ENCODE measurements at regions of chr4 and their contacts with region 1.

Region 1: GRCh38 chr4:78022517-78022916 is 34.6 kb upstream of the FRAS1 start:
- DNase-seq: no peak
- ATAC-seq: no peak
- H3K4me3 ChIP-seq: no peak overlapping the region
- H3K27ac ChIP-seq: no peak overlapping the region
- H3K4me1 ChIP-seq: no peaks in the 10 kb centered on the region
- H3K27me3 ChIP-seq: no peaks in the 10 kb centered on the region
- CTCF ChIP-seq: no peak
- POLR2A ChIP-seq: no peak
- RAD21 ChIP-seq: no peak

Region 2: GRCh38 chr4:78454501-78454900 is 432.0 kb after region 1 on chr4:
- CTCF ChIA-PET with region 1: no interaction called
- POLR2A ChIA-PET with region 1: no interaction called
- dilution Hi-C with region 1: no loop called
- in situ Hi-C with region 1: no loop called
- intact Hi-C with region 1: no loop called
- DNase-seq: no peak
- ATAC-seq: no peak
- H3K4me3 ChIP-seq: no peak overlapping the region
- H3K27ac ChIP-seq: no peak overlapping the region
- H3K4me1 ChIP-seq: no peaks in the 10 kb centered on the region
- H3K27me3 ChIP-seq: peaks cover 8% of the 10 kb centered on the region
- CTCF ChIP-seq: no peak
- POLR2A ChIP-seq: no peak
- RAD21 ChIP-seq: no peak

Region 3: DNA sequence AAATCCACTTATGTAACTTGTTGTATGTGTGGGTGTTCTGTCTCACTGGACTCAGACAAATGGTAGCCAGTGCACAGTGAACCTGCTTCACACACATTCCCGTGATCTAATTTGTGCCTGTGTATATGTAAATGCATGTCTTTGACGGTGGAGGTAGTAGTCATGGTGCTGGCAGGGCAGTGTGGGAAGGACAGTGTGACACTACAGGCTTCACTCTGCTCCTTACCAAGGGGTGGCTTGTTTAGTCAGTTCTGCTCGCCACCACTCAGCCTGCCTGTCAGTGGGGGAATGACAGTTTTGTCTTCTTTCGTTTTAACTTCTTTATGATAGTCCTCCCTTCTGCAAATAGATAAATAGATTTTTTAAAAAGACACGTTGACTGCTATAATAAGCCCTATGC is 934.5 kb after region 1 on chr4:
- CTCF ChIA-PET with region 1: no interaction called
- POLR2A ChIA-PET with region 1: interaction called, 11 read pairs
- dilution Hi-C with region 1: no loop called
- in situ Hi-C with region 1: no loop called
- intact Hi-C with region 1: no loop called
- DNase-seq: no peak
- ATAC-seq: no peak
- H3K4me3 ChIP-seq: no peak overlapping the region
- H3K27ac ChIP-seq: no peak overlapping the region
- H3K4me1 ChIP-seq: no peaks in the 10 kb centered on the region
- H3K27me3 ChIP-seq: peaks cover 3% of the 10 kb centered on the region
- CTCF ChIP-seq: no peak
- POLR2A ChIP-seq: no peak
- RAD21 ChIP-seq: no peak

Measured in IMR-90 (cell line).